ENCODE measurements at regions of chr1 and their contacts with region 1.

Region 1: DNA sequence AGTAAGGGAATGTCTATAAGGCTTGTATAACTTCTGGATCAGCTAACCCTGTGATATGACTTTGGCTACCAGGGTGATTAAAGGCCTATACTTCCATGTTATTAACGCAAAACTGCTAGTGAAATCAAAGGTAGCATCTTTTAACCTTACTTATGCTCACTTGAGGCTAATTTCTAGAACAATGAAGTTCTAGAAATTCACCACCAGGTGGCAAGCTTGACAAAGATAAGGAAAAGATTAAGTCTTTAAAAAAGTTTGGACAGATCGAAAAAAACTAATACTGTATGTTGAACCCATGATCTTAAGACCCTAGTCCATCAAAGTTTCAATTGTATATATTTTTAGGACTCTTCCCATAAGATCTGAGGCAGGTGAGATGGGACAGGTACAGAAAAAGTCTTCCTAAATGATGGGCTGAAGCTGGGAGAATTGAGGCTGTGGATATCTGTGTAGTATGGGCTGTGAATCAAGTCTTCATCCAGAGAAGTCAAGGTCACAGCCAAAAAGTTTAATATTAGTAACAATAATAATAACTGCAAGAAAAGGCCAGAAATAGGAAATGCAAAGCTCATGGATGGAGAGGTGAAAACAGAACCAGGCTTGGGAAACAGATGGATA is 18.8 kb downstream of the KYAT3 start:
- DNase-seq: peak; percentile 71
- ATAC-seq: 0 out of 2 replicates have a peak, but pooled peaks have one; percentile 29
- H3K4me3 ChIP-seq: no peak overlapping the region
- H3K27ac ChIP-seq: no peak overlapping the region
- H3K4me1 ChIP-seq: no peaks in the 10 kb centered on the region
- H3K27me3 ChIP-seq: no peaks in the 10 kb centered on the region
- CTCF ChIP-seq: peak; percentile 82

Region 2: GRCh38 chr1:88961647-88962275 is 11.9 kb before region 1 on chr1:
- CTCF ChIA-PET with region 1: interaction called, 13 read pairs
- POLR2A ChIA-PET with region 1: no interaction called
- intact Hi-C with region 1: no loop called
- DNase-seq: peak; percentile 66
- ATAC-seq: peak; percentile 94
- H3K4me3 ChIP-seq: no peak overlapping the region
- H3K27ac ChIP-seq: peak overlapping the region; percentile 21
- H3K4me1 ChIP-seq: peaks cover 23% of the 10 kb centered on the region
- H3K27me3 ChIP-seq: no peaks in the 10 kb centered on the region
- CTCF ChIP-seq: no peak

Region 3: DNA sequence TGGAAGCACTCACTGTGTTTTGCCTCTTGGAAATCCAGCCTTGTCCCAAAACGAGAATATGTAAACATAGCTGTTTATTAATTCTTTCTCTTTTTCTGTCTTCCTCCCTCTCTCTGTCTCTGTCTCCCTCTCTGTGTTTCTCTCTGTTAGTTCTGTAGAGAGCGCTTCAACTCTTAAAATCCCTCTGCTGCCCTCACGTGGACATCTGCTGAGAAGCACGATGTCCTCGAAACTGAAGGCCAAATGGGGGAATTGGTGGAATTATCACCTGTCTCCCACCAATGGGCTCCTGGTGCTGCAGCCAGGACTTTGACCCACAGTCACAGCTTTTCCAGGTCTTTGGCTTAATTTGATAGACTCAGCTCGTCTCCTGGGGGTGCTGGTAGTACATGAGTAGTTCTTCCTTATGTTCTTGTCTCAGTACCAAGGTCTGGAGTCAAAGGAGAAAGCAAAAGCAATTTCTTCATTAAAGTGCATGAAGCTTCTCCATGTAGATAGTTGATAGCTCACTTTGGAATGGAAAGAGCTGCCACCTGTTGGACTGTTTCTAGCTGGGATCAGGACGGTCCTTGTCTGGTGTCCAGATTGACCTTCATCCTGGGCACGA is 384.8 kb after region 1 on chr1:
- CTCF ChIA-PET with region 1: no interaction called
- POLR2A ChIA-PET with region 1: no interaction called
- intact Hi-C with region 1: loop called (anchors 1 kb)
- DNase-seq: peak; percentile 86
- ATAC-seq: peak; percentile 83
- H3K4me3 ChIP-seq: no peak overlapping the region
- H3K27ac ChIP-seq: no peak overlapping the region
- H3K4me1 ChIP-seq: peaks cover 20% of the 10 kb centered on the region
- H3K27me3 ChIP-seq: peaks cover 6% of the 10 kb centered on the region; the same call in 1 of the 2 replicates
- CTCF ChIP-seq: peak; percentile 87